ENCODE measurements at regions of chr1 and their contacts with region 1.

Region 1: GRCh38 chr1:145740266-145740665 is 21.0 kb downstream of the CD160 start:
- DNase-seq: peak; percentile 9
- H3K4me3 Mint-ChIP-seq: no peak overlapping the region
- H3K27ac Mint-ChIP-seq: no peak overlapping the region
- H3K4me1 Mint-ChIP-seq: peaks cover 23% of the 10 kb centered on the region
- H3K27me3 Mint-ChIP-seq: no peaks in the 10 kb centered on the region
- CTCF ChIP-seq: no peak

Region 2: GRCh38 chr1:145782166-145783099 is 42.2 kb after region 1 on chr1:
- CTCF ChIA-PET with region 1: interaction called, 4 read pairs
- intact Hi-C with region 1: loop called (anchors 5 kb)
- DNase-seq: peak; percentile 39
- H3K4me3 Mint-ChIP-seq: no peak overlapping the region
- H3K27ac Mint-ChIP-seq: peak overlapping the region; percentile 85
- H3K4me1 Mint-ChIP-seq: peaks cover 45% of the 10 kb centered on the region
- H3K27me3 Mint-ChIP-seq: no peaks in the 10 kb centered on the region
- CTCF ChIP-seq: no peak